PC-9 (cell line): ENCODE measurements at regions of chr7 and their contacts with region 1.

Region 1: DNA sequence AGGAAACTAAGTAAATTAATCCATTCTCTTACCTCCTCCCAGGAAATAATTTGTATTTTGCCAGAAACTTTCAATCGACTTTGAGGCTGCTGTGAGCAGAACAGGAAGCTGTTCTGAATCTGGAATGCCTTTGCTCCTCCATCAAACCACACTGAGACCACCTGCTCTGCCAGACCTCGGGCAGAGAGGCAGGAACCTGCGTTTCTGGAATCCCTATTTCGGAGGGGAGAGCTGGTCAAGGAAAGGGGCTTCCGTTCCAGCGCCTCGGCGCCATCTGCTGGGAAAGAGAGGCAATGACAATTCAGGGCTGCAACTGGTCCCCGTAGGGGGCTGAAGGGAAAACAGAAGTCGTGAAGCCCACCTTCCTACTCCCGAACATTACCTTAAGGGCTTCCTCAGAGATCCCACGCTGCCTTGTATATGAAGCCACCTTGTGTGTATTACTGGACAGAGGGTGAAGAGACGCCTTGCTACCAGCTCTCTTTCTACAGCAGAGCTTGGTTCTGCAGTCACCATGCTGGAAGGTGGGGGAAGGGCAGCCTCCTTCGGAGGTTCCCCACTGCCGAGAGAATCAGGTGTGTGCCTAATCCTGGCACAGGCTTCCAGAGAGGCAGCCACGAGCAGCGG is 31.2 kb downstream of the ZNF467 start:
- DNase-seq: peak in 1 of 2 experiments; percentile 76
- H3K4me3 ChIP-seq: peak overlapping the region; percentile 54
- H3K27ac ChIP-seq: no peak overlapping the region
- H3K4me1 ChIP-seq: peaks cover 7% of the 10 kb centered on the region; the same call in 1 of the 2 replicates
- H3K27me3 ChIP-seq: 0 out of 2 replicates have a peak, but pooled peaks cover 12% of the 10 kb centered on the region
- CTCF ChIP-seq: peak; percentile 96

Region 2: DNA sequence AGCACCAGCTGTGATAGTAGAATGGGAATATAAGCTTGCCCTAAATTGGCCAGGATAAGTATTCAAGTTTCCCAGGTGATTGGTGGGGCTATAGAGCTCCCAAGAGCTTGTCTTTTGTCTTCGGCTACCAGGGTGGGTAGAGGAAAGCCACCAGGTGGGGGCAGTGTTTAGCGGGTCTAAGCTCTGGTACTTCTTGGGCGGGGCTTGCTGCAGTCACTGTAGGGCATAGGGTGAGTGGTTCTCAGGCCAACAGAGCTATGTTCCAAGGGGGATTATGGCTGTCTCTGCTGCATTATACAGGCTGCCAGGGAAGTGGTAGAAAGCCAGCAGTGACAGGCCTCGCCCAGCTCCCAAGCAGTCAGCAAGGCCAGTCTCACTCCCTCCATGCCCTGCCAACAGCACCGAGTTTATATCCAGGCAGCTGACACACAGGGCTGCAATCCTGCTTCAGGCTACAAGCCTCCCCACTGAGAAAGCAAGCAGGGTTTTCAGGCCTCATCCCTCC is 79.5 kb before region 1 on chr7:
- CTCF ChIA-PET with region 1: interaction called, 17 read pairs
- POLR2A ChIA-PET with region 1: no interaction called
- intact Hi-C with region 1: loop called (anchors 2 kb)
- DNase-seq: peak; percentile 66 to 67
- H3K4me3 ChIP-seq: no peak overlapping the region
- H3K27ac ChIP-seq: no peak overlapping the region
- H3K4me1 ChIP-seq: no peaks in the 10 kb centered on the region
- H3K27me3 ChIP-seq: peaks cover 17% of the 10 kb centered on the region
- CTCF ChIP-seq: peak; percentile 85

Region 3: GRCh38 chr7:149669121-149669818 is 72.9 kb before region 1 on chr7:
- CTCF ChIA-PET with region 1: interaction called, 5 read pairs
- POLR2A ChIA-PET with region 1: no interaction called
- intact Hi-C with region 1: loop called (anchors 1 kb)
- DNase-seq: no peak
- H3K4me3 ChIP-seq: no peak overlapping the region
- H3K27ac ChIP-seq: no peak overlapping the region
- H3K4me1 ChIP-seq: peaks cover 6% of the 10 kb centered on the region
- H3K27me3 ChIP-seq: no peaks in the 10 kb centered on the region
- CTCF ChIP-seq: peak; percentile 69

Region 4: GRCh38 chr7:149704507-149704906 is 37.7 kb before region 1 on chr7:
- CTCF ChIA-PET with region 1: no interaction called
- POLR2A ChIA-PET with region 1: no interaction called
- intact Hi-C with region 1: no loop called
- DNase-seq: no peak
- H3K4me3 ChIP-seq: no peak overlapping the region
- H3K27ac ChIP-seq: no peak overlapping the region
- H3K4me1 ChIP-seq: no peaks in the 10 kb centered on the region
- H3K27me3 ChIP-seq: no peaks in the 10 kb centered on the region
- CTCF ChIP-seq: no peak

Region 5: DNA sequence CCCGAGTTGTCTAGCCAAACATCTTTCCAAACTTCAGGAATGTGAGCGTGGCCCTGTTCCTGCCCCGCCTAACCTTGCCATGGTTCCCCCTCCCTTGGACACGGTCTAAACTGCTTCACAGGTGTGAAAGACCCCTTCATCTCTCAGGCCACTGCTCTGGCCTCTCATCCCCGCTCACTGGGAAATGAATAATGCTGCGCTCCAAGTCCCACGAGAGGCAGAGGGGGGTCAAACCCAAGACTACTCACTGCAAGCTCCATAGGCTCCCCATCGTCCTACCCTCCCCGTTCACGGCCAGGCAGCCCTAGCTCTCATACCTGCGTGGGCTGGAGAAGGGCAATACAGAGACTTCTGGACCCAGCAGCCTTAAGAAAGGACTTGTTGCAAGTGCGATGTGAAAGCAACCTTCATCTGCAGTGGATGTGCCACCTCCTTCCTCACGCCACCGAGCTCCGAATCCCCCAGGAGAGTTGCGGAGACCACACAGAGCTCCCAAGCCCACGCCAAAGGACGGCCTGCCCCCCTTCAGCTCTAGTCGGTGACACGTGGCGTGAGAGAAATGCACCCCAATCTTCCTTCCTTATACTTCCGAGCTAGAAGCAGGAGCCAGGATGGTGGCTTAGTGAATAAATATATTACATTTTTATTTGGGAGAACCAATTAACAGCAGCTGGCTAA is 21.5 kb after region 1 on chr7:
- CTCF ChIA-PET with region 1: no interaction called
- POLR2A ChIA-PET with region 1: no interaction called
- intact Hi-C with region 1: no loop called
- DNase-seq: no peak
- H3K4me3 ChIP-seq: no peak overlapping the region
- H3K27ac ChIP-seq: no peak overlapping the region
- H3K4me1 ChIP-seq: no peaks in the 10 kb centered on the region
- H3K27me3 ChIP-seq: peaks cover 19% of the 10 kb centered on the region; the same call in 1 of the 2 replicates
- CTCF ChIP-seq: no peak